Left cardiac atrium (tissue), 4 donors: ENCODE measurements at regions of chr2 and their contacts with region 1.

Region 1: DNA sequence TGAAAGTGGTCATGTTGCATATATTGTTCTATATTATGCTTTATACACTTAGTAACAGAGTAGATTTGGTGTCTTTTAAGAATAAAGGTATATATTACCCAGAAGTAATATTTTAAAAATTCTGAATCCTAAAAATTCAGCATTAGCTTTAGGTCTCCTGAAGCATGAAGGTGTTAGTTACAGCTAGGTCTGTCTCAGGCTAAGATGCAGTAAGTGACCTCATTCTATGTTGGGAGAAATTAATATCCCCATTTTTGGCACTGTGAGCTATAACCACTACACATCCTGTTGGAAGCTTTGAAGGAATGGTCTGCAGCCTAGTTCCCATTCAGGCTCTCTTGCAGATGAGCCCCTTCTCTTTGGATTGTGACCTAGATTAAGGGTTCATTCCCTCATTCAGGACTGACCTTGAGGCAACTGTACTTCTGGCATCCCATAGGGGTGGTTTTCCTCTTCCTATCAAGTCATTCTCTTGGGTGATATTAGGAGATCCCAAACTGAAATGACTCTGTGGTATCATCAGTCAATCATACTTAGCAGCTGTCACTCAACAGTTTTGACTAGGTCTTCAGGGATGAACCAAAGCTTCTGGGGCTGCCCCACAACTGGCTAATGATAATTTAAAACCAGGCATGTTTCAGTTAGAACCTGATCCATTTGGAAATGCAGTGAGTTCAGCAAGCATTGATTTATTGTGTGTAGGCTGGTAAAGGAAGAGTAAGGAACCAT is 117.7 kb downstream of the GPD2 start:
- DNase-seq: no peak
- ATAC-seq: no peak

Region 2: GRCh38 chr2:156435715-156436496 is 118.0 kb before region 1 on chr2 and contains the start of gene GPD2:
- intact Hi-C with region 1: loop called in 1 of 2 experiments (anchors 10 kb)
- DNase-seq: peak; percentile 95
- ATAC-seq: peak; percentile 95 to 99
- total RNA-seq, gene GPD2: 15.7 to 19.8 TPM

Region 3: DNA sequence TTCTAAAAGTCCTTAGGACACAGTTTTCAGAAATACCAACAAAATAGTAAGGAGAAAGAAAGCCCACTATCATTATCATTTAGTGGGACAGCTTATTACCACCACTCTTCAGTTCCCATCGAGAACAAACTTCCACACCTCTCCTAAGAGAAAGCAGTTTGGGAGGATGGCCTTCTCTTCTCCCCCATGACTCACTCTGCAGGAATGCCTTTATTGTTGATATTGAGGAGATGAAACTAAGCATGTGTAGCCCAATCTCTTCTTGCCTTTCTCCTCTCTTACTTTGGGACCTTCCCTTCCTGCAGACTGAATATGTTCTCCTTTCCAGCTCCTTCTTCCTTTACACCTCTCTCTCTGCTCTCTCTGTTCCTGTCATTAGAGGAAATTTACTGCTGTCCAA is 801.7 kb after region 1 on chr2:
- intact Hi-C with region 1: no loop called
- DNase-seq: no peak
- ATAC-seq: no peak